GM18951 (cell line): ENCODE measurements at regions of chr2 and their contacts with region 1.

Region 1: DNA sequence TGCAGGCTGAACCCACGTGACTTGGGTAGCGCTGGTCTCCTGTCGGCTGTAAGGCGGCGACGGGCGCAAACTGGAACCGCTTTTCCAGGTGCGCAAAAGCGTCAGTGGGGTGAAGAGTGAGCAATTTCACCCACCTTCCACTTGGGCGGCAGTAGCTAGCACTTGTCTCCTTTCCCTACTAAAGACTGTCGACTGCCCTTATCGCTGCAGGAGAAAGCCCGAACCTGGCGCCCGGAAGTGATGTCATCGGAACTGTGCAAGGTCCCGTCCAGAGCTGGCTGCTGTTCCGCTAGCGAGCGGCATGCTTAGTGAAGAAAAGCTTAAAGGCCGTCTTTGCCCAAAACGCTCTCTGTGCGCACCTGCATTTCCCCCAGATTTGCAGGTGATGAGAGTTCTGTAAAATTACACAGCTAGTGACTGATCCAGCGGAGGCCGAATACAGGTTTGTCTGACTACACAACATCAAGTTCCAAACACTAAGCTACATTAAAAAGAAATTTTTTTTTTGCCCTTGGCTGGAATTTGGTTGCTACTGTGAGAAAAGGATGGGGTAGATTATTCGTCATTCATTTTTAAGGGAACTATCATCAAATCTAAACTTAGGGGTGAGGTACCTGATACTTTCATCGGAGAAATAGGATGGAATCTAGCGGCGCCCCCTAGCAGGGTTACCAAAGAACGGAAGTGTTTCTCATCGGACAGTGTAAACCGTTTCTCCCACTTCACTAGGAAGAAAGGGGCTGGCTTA is at the start of gene OSGEPL1:
- POLR2A ChIP-seq: peak; percentile 80

Region 2: GRCh38 chr2:189221853-189222772 is 540.6 kb before region 1 on chr2:
- in situ Hi-C with region 1: no loop called
- POLR2A ChIP-seq: no peak

Region 3: DNA sequence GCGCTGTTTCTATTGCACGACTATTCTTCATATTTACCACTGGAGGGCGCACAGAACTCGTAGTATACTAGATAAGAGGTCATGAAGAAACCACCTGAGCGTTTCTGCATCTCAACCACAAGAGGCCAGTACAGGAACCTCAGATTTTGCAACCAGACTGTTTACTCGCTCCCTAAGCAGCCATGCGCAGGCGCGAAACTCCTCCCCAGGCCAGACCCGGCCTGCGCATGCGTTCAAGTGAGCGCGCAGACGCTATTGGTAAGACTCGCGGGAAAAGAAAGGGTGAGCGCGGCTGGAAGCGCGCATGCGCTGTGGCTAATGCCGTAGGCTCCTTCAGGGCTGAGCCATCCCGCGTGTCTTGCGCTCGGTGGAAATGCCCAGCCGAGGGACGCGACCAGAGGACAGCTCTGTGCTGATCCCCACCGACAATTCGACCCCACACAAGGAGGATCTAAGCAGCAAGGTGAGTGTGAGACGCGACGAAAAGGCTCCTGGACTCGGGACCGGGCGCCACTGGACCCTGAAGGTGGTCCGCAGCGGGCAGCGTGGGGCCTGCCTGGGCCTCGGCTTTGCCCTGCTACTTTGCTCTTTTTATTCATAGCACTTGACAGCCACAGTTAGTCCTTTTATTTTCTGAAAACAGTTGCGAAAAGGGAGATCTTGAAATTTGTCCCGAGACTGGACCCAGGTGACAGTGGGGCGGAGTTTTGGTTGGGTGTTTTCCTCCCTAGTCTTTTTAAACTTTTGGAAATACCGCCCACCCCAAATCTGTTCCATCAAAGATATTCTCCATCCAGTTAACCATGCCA is 101.4 kb before region 1 on chr2 and contains the start of gene ASNSD1:
- in situ Hi-C with region 1: loop called (anchors 25 kb)
- POLR2A ChIP-seq: peak; percentile 95

Region 4: DNA sequence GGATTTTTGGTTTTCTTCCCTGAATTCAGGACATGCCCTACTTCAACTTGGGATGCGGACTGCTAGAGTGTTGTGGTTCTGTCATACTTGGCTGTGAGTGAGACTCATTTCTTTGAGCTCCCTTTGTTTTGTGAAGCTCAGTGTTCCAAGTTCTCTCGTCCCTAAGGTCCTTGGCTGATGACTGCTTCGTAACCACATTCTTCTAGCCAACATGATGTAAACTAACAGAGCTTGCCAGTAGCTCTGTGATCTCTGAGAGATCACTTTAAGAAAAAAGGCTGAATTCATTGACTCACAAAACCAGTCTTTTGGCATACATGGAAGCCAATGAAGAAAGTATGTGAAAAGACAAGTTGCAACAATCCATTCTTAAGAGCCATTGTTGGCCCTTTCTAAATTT is 396.7 kb after region 1 on chr2:
- in situ Hi-C with region 1: no loop called
- POLR2A ChIP-seq: no peak